ENCODE measurements at regions of chr2 and their contacts with region 1.

Region 1: GRCh38 chr2:54704688-54705605 is 18.5 kb upstream of the EML6 start:
- DNase-seq: peak; percentile 69 to 86 (median 83)
- H3K4me3 ChIP-seq: no peak overlapping the region
- H3K27ac ChIP-seq: no peak overlapping the region
- H3K4me1 ChIP-seq: peaks cover 0 to 14% (median 11%) of the 10 kb centered on the region in 4 experiments
- H3K27me3 ChIP-seq: peaks cover 0 to 11% (median 0%) of the 10 kb centered on the region in 5 experiments

Region 2: GRCh38 chr2:54657664-54658083 is 47.3 kb before region 1 on chr2:
- CTCF ChIA-PET with region 1: interaction called, 18 read pairs
- POLR2A ChIA-PET with region 1: no interaction called
- DNase-seq: peak in 2 of 3 donors; percentile 41 to 49
- H3K4me3 ChIP-seq: no peak overlapping the region
- H3K27ac ChIP-seq: no peak overlapping the region
- H3K4me1 ChIP-seq: no peaks in the 10 kb centered on the region
- H3K27me3 ChIP-seq: no peaks in the 10 kb centered on the region

Region 3: DNA sequence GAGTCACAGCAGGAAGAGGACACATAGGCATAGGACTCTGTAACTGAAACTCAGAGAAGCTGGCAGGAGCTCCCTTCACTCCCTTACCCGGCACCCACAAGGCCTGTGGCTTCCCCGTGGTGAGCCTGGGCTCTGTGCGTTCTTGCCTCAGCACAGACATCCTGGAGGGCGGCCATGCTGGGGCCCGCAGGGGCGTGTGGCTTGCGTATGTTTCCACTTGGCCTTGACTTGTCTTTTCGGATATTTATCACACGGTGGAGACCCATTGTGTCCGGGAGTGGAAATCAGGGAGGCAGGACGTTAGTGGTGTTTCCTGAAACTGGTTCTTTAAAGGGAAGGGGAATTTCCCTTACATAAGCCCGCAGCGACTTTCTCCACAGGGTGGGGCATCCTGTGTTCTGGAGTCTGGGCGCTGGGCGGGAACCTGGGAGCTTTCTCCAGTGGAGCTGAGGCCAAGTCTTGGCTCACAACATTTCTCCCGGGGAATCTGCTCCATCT is 31.4 kb before region 1 on chr2:
- CTCF ChIA-PET with region 1: interaction called, 17 read pairs
- POLR2A ChIA-PET with region 1: interaction called, 4 read pairs
- DNase-seq: peak; percentile 24 to 73 (median 71)
- H3K4me3 ChIP-seq: peak overlapping the region in 4 of 7 experiments; percentile 23 to 65 (median 57)
- H3K27ac ChIP-seq: no peak overlapping the region
- H3K4me1 ChIP-seq: peaks cover 4 to 24% (median 22%) of the 10 kb centered on the region in 4 experiments
- H3K27me3 ChIP-seq: peaks cover 0 to 11% (median 0%) of the 10 kb centered on the region in 5 experiments

Region 4: DNA sequence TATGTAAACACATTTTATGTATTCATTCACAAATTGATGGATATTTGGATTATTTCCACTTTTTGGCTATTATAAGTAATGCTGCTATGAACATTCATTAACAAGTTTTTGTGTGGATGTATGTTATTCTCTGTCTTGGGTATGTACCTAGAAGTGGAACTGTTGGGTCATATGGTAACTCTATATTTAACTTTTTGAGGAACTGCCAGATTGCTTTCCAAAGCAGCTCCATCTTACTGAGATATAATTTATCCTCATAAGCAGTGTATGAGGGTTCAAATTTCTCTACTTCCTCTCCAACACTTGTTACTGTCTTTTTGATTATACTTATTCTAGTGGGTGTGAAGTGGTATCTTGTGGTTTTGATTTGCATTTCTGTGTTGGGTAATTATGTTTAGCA is 11.4 kb after region 1 on chr2:
- CTCF ChIA-PET with region 1: interaction called, 16 read pairs
- POLR2A ChIA-PET with region 1: no interaction called
- DNase-seq: no peak
- H3K4me3 ChIP-seq: no peak overlapping the region
- H3K27ac ChIP-seq: no peak overlapping the region
- H3K4me1 ChIP-seq: no peaks in the 10 kb centered on the region
- H3K27me3 ChIP-seq: no peaks in the 10 kb centered on the region